ENCODE measurements at regions of chr22 and their contacts with region 1.

Region 1: GRCh38 chr22:23289851-23290724 is 109.8 kb downstream of the BCR start:
- DNase-seq: peak; percentile 25 to 91
- H3K4me3 ChIP-seq: no peak overlapping the region
- H3K27ac ChIP-seq: no peak overlapping the region
- H3K4me1 ChIP-seq: no peaks in the 10 kb centered on the region
- H3K27me3 ChIP-seq: no peaks in the 10 kb centered on the region
- CTCF ChIP-seq: peak; percentile 78 to 91 (median 87)
- EP300 ChIP-seq: no peak
- POLR2A ChIP-seq: no peak
- RAD21 ChIP-seq: peak; percentile 44 to 60

Region 2: DNA sequence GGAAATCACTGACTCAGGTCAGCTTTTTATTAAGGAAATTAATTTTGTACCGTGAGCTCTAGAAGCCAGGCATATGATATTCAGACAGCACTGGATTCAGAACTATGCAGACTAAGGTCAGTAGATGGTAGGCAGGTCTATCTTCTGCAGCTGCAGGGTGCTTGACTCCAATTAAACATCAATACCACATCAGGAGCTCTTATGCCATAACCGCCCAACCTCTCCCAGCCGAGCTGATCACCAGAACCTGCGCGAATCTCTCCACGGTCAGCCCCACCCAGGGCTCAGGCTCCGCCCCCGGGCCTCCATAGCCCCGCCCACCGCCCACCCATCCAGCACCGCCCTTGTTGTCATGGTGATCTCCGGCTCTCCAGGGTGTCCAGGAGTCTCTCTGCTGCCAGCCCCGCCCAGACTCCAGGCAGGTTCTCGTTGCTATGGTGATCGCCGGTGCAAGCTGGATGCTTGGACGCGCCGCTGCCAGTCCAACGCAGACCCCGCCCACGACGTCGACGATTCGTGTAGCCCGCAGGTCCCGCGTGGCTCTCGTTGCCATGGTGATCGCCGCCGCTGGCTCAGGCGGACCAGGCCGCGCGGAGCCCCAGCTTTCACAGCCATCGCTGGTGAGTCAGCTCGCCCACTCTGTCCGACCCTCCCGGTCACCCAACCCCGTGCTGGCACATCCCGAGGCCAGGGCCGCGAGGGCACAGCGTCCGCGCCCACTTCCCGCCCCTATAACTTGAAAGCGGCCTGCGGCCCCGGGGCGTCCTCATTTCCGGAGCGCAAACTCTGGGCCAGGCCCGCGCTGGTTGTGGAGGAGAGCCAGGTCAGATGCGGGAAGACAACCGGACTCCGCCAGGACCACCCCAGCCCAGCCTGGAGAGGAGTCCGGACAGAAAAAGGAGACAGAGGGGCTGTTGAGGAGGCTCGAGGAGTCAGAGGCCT is 144.9 kb before region 1 on chr22 and contains the start of gene RAB36:
- CTCF ChIA-PET with region 1: interaction called, 16 read pairs
- POLR2A ChIA-PET with region 1: no interaction called
- DNase-seq: peak; percentile 96 to 98
- H3K4me3 ChIP-seq: peak within 1 kb of the TSS; percentile 33 to 65 (median 59)
- H3K27ac ChIP-seq: no peak within 1 kb of the TSS
- H3K4me1 ChIP-seq: peaks cover 0 to 21% (median 9%) of the 10 kb centered on the region in 4 experiments; a peak in 5 of 7 replicates
- H3K27me3 ChIP-seq: peaks cover 0 to 14% (median 7%) of the 10 kb centered on the region in 4 experiments; a peak in 5 of 7 replicates
- CTCF ChIP-seq: no peak
- EP300 ChIP-seq: no peak
- POLR2A ChIP-seq: no peak
- RAD21 ChIP-seq: no peak
- total RNA-seq, gene RAB36: 1.0 and 1.1 TPM in 2 replicates

Region 3: GRCh38 chr22:23152315-23153113 is 137.6 kb before region 1 on chr22:
- CTCF ChIA-PET with region 1: interaction called, 23 read pairs
- POLR2A ChIA-PET with region 1: no interaction called
- DNase-seq: no peak
- H3K4me3 ChIP-seq: no peak overlapping the region
- H3K27ac ChIP-seq: no peak overlapping the region
- H3K4me1 ChIP-seq: peaks cover 0 to 27% (median 12%) of the 10 kb centered on the region in 4 experiments; a peak in 5 of 7 replicates
- H3K27me3 ChIP-seq: no peaks in the 10 kb centered on the region; a peak in 1 of 7 replicates
- CTCF ChIP-seq: no peak
- EP300 ChIP-seq: no peak
- POLR2A ChIP-seq: no peak
- RAD21 ChIP-seq: no peak

Region 4: GRCh38 chr22:23270212-23270733 is 19.8 kb before region 1 on chr22:
- CTCF ChIA-PET with region 1: interaction called, 15 read pairs
- POLR2A ChIA-PET with region 1: interaction called, 3 read pairs
- DNase-seq: no peak
- H3K4me3 ChIP-seq: no peak overlapping the region
- H3K27ac ChIP-seq: no peak overlapping the region
- H3K4me1 ChIP-seq: peaks cover 0 to 29% (median 20%) of the 10 kb centered on the region in 4 experiments; a peak in 6 of 7 replicates
- H3K27me3 ChIP-seq: no peaks in the 10 kb centered on the region
- CTCF ChIP-seq: peak in 2 of 3 experiments; percentile 50 to 58; a peak in 3 of 4 replicates
- EP300 ChIP-seq: no peak
- POLR2A ChIP-seq: no peak; a peak in 1 of 3 replicates
- RAD21 ChIP-seq: peak; percentile 57 to 69

Region 5: DNA sequence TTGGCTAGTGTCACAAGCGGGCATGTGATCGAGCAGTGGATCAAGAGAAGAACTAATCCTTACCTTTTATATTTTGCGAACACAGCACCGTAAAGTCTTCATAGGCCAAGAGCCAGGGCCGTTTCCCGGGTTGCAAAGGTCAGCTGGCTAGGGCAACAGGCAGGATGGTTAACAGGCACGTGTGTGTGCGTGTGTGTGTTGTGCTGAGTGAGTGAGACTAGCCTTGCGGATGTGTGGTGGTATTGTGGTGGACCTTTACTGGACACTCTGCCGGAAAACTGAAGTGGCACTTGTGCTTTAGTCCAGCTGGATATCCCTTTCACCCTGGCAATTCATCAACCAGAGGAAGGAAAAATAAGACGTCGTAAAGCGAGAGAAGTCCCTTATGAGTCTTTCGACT is 67.0 kb after region 1 on chr22:
- CTCF ChIA-PET with region 1: no interaction called
- POLR2A ChIA-PET with region 1: no interaction called
- DNase-seq: no peak
- H3K4me3 ChIP-seq: no peak overlapping the region
- H3K27ac ChIP-seq: no peak overlapping the region
- H3K4me1 ChIP-seq: no peaks in the 10 kb centered on the region
- H3K27me3 ChIP-seq: peaks cover 22 to 60% (median 44%) of the 10 kb centered on the region in 4 experiments
- CTCF ChIP-seq: no peak
- EP300 ChIP-seq: no peak
- POLR2A ChIP-seq: no peak
- RAD21 ChIP-seq: no peak